ENCODE measurements at regions of chr2 and their contacts with region 1.

Region 1: GRCh38 chr2:38602732-38603401 is at the start of gene HNRNPLL:
- DNase-seq: peak; percentile 98
- CTCF ChIP-seq: peak; percentile 20

Region 2: GRCh38 chr2:37947306-37947705 is 655.6 kb before region 1 on chr2:
- CTCF ChIA-PET with region 1: no interaction called
- POLR2A ChIA-PET with region 1: no interaction called
- DNase-seq: no peak
- CTCF ChIP-seq: no peak

Region 3: GRCh38 chr2:38619458-38620164 is 16.7 kb after region 1 on chr2:
- CTCF ChIA-PET with region 1: interaction called, 31 read pairs
- POLR2A ChIA-PET with region 1: no interaction called
- DNase-seq: peak; percentile 46
- CTCF ChIP-seq: no peak

Region 4: DNA sequence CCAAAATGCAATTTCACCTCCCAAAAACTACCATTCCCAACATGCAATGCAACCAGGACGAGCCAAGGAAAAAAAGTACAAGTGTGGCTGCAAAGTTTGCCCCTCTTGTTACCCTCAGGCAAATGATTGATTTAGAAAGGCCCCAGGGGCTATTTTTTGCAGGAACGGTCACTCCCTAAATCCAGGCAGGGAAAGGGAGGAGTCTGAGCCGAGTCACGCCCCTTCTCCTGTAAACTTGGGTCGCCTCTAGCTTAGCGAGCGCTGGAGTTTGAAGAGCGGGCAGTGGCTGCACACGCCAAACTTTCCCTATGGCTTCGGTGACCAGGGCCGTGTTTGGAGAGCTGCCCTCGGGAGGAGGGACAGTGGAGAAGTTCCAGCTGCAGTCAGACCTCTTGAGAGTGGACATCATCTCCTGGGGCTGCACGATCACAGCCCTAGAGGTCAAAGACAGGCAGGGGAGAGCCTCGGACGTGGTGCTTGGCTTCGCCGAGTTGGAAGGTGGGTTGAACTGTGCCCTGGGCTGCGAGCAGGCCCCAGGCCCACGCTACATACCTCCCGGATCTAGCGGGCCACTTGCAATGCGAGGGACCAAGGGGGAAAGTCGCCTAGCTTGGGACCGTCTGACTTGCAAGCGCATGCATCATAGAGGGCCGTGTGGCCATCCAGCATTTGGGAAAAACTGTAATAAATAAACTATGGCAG is 63.1 kb after region 1 on chr2 and contains the start of gene GALM:
- CTCF ChIA-PET with region 1: interaction called, 38 read pairs
- POLR2A ChIA-PET with region 1: no interaction called
- DNase-seq: peak; percentile 54
- CTCF ChIP-seq: no peak

Region 5: DNA sequence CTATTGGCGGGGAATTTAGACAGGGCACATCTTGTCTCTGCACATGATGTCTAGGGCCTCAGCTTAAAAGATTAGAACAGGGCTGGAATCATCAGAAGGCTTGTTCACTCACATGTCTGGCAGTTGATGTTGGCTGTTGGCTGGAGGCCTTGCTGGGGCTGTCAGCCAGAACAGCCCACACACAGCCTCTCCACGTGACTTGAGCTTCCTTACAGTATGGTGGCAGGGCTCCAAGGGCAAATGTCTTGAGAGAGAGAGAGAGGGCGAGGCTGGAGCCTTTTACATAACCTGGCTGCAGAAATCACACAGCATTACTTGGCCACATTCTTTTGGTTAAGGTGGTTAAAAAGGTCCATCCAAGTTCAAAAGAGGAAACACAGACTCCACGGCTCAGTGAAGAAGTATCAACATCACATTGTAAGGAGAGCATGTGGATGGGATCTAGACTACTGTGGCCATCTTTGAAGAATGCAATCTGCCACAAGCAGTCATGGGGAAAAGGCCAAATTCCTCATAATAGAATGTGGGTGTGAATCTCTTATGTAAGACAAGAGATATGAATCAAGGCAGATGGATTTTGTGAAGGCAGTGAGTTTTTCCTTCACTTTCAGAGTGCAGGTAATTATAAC is 117.9 kb after region 1 on chr2:
- CTCF ChIA-PET with region 1: interaction called, 45 read pairs
- POLR2A ChIA-PET with region 1: no interaction called
- DNase-seq: no peak
- CTCF ChIP-seq: no peak